Activated B cell treated with CpG ODN at 0.5 μM for 24 hours (primary cell): ENCODE measurements at regions of chr15 and their contacts with region 1.

Region 1: DNA sequence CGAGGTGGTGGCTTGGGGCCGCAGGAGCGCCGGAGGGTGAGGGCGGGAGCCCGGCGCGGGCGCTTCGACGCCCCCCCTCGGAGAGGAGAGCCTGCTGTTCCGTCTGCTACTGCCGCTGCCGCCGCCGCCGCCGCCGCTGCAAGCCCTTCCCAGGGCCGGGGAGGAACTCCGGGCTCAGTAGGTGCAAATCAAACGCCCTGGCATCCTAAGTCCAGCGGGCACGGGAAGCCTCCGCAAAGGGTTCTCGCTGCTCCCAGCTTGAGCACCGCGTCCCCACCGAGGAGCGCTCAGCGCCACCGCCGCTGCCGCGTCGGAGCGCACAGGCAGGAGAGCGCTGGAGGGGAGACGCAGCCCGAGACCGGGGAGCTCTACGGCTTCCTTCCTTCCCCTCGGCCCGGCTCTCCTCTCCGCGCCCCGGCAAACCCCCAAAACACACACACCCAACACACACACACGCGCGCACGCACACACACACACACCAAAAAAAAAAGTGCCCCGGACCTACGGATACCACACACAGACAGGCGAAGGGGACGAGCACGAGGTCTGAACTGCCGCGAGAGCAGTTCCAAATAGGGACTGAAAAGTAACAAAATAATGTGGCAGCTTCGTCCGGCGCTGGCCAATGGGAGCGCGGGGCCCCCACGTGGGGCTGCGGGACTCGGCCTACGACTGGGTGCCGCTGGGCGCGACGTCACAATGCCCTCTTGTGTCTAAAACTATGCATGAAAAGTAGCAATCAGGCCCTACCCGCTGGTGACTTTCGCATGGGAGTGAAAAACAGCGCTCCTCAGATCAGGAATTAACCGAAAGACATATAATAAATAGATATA is at the start of gene TLE3:
- DNase-seq: peak; percentile 96
- ATAC-seq: peak; percentile 56
- H3K4me3 Mint-ChIP-seq: peak within 1 kb of the TSS; percentile 98
- H3K27ac Mint-ChIP-seq: peak within 1 kb of the TSS; percentile 97
- H3K4me1 Mint-ChIP-seq: peaks cover 60% of the 10 kb centered on the region
- H3K27me3 Mint-ChIP-seq: peaks cover 2% of the 10 kb centered on the region
- CTCF ChIP-seq: no peak
- total RNA-seq, gene TLE3: 106 and 110 TPM in 2 replicates

Region 2: DNA sequence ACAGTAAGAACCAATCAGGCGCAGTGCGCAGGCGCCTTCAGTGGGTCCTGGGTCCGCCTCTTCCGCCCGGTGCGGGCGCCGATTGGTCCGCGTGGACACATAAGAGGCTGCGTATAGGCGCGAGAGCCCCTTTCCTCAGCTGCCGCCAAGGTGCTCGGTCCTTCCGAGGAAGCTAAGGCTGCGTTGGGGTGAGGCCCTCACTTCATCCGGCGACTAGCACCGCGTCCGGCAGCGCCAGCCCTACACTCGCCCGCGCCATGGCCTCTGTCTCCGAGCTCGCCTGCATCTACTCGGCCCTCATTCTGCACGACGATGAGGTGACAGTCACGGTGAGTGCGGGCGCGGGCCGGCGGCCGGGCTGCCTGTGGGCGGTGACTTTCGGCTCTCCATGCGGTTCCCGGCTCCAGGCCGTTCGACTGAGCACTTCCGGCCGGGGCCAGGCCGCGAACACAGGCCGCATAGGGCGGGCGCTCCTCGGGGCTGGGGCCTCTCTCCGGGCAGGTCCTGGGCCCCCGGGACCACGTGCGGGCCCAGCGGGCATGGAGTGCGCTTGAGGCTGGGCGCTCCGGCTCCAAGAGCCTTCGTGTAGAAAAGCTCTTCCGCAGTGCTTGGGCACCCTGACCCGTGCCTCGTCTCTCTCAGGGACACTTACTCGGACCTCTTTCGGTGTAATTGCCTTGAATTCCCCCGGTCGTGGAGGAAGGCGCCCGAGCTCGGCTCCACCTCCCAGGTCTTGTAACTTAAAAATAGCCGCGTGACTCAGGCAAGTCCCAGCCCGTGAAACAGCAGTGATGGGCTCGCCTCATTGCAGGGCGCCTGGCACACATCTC is 644.6 kb before region 1 on chr15 and contains the start of gene RPLP1:
- CTCF ChIA-PET with region 1: no interaction called
- POLR2A ChIA-PET with region 1: interaction called, 16 read pairs
- intact Hi-C with region 1: no loop called
- DNase-seq: peak; percentile 94
- ATAC-seq: peak; percentile 90
- H3K4me3 Mint-ChIP-seq: peak within 1 kb of the TSS; percentile 98
- H3K27ac Mint-ChIP-seq: peak within 1 kb of the TSS; percentile 99
- H3K4me1 Mint-ChIP-seq: peaks cover 46% of the 10 kb centered on the region
- H3K27me3 Mint-ChIP-seq: no peaks in the 10 kb centered on the region
- CTCF ChIP-seq: no peak
- total RNA-seq, gene RPLP1: 3,035 and 3,437 TPM in 2 replicates

Region 3: DNA sequence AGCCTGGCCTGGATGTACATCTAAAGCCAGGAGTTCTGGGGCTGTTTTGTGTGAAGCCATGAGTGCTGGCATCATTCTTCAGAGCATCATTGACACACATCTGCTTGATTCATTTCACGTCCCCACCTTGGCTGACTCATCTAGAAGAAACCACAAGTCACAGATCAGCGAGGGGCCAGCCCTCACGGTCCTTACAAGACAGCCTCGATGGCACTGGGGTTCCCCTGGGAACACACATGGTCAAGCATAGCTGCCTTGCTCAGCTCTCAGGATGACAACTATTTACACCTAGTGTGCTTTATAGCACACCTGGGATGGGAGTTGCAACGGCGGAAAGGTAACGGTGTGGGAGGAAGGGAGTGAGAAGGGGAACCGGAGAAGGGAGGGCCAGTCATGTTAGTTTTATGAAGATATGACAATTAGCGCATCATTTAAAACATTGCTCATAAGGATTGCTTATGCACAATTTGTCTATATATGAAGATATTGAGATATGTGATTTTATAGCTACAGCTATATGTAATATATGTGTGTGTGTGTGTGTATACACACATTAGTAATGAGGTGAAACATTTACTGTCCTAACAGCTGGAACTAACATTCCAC is 417.8 kb before region 1 on chr15:
- CTCF ChIA-PET with region 1: no interaction called
- POLR2A ChIA-PET with region 1: interaction called, 5 read pairs
- intact Hi-C with region 1: loop called (anchors 2 kb)
- DNase-seq: peak; percentile 44
- ATAC-seq: peak; percentile 93
- H3K4me3 Mint-ChIP-seq: no peak overlapping the region
- H3K27ac Mint-ChIP-seq: peak overlapping the region; percentile 68
- H3K4me1 Mint-ChIP-seq: peaks cover 25% of the 10 kb centered on the region
- H3K27me3 Mint-ChIP-seq: peaks cover 23% of the 10 kb centered on the region
- CTCF ChIP-seq: no peak

Region 4: DNA sequence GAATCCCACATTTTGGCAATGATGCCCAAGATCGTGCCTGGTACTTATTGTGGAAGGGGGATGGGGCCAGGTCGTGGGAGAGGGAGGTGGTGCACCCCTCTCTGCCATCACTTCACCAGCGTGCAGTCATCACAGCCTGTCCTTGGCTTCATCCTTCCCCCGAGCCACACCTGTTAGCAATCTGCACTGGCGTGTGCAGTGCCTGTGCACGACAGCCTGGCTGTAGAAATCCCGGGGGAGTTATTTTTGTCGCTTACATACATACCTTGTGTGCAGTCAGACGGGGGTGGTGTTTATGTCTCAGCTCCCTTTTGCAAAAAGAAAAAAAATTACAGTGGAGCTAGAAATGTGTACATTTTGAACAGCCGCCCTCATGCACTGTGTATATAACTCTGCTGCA is 215.8 kb before region 1 on chr15:
- CTCF ChIA-PET with region 1: interaction called, 3 read pairs
- POLR2A ChIA-PET with region 1: interaction called, 44 read pairs
- intact Hi-C with region 1: loop called (anchors 1 kb)
- DNase-seq: peak; percentile 54
- ATAC-seq: peak; percentile 94
- H3K4me3 Mint-ChIP-seq: peak overlapping the region; percentile 73
- H3K27ac Mint-ChIP-seq: peak overlapping the region; percentile 82
- H3K4me1 Mint-ChIP-seq: peaks cover 36% of the 10 kb centered on the region
- H3K27me3 Mint-ChIP-seq: peaks cover 3% of the 10 kb centered on the region
- CTCF ChIP-seq: no peak

Region 5: DNA sequence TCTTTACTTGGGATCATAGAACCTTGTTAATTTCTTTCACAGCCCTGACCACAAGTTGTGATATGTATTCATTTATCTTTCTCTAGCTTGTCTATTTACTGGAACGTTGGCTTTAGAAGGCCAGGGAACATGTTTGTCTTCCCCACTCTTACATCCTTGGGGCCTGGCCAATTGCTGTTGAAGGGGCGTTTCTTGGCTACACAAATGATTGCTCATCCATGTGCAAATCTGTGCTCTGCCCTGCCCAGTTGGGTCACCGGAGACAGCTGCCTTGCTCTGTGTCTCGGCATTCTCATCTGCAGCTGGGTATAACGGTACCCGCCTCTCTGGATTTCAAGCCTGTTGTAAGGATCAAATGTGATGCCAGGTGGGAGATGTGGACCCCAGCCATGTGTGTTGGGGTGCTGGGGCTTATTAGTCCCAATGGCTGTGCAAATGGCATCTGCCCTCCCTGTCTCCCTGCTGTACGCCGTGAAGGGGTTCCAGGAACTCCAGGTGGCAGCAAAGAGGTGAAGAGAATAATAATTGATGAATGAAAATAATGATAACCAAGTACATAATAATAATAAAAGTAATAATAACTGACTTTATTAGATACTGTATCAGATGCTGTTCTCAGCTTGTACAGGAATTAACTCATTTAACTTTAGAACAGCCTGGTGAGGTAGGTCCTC is 24.2 kb after region 1 on chr15:
- CTCF ChIA-PET with region 1: no interaction called
- POLR2A ChIA-PET with region 1: no interaction called
- intact Hi-C with region 1: no loop called
- DNase-seq: no peak
- ATAC-seq: no peak
- H3K4me3 Mint-ChIP-seq: no peak overlapping the region
- H3K27ac Mint-ChIP-seq: no peak overlapping the region
- H3K4me1 Mint-ChIP-seq: peaks cover 6% of the 10 kb centered on the region
- H3K27me3 Mint-ChIP-seq: peaks cover 12% of the 10 kb centered on the region
- CTCF ChIP-seq: no peak

Region 6: GRCh38 chr15:70196314-70197291 is 99.0 kb after region 1 on chr15:
- CTCF ChIA-PET with region 1: no interaction called
- POLR2A ChIA-PET with region 1: interaction called, 6 read pairs
- intact Hi-C with region 1: loop called (anchors 1 kb)
- DNase-seq: peak; percentile 62
- ATAC-seq: peak; percentile 82
- H3K4me3 Mint-ChIP-seq: peak overlapping the region; percentile 55
- H3K27ac Mint-ChIP-seq: peak overlapping the region; percentile 79
- H3K4me1 Mint-ChIP-seq: peaks cover 58% of the 10 kb centered on the region
- H3K27me3 Mint-ChIP-seq: peaks cover 7% of the 10 kb centered on the region
- CTCF ChIP-seq: no peak

Region 7: GRCh38 chr15:70318594-70319465 is 221.3 kb after region 1 on chr15:
- CTCF ChIA-PET with region 1: no interaction called
- POLR2A ChIA-PET with region 1: interaction called, 25 read pairs
- intact Hi-C with region 1: loop called (anchors 1 kb)
- DNase-seq: no peak
- ATAC-seq: peak; percentile 25
- H3K4me3 Mint-ChIP-seq: peak overlapping the region; percentile 72
- H3K27ac Mint-ChIP-seq: peak overlapping the region; percentile 85
- H3K4me1 Mint-ChIP-seq: peaks cover 57% of the 10 kb centered on the region
- H3K27me3 Mint-ChIP-seq: no peaks in the 10 kb centered on the region
- CTCF ChIP-seq: no peak

Region 8: DNA sequence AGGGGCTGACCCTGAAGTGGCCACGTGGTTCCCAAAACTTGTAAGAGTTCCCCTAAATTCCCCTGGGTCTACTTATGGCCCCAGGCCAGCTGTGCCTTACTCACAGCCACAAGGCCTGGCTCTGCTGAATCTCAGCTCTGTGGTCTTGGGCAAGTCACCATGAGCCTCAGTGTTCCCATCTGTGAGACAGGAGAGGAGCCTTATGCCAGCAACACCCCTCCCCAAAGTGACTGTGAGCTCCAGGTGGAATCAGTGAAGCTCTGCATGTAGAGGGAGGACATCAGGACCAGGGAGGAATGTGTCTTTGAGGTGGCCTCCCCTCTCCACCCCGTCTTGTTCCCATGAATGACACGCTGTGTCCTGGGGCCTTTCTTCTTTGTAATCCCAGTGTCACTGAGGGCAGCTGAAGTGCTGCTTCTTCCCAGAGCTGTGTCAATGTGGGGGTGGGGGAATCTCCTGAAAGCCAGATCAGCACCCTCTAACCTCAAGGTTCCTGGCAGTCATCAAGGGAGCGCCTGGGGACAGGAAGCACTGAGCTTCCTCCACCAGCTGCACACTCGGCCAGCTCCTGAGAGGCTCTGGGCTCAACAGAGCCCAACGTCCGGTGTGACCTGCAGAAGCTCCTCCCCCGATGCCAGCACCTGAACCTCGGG is 406.9 kb after region 1 on chr15:
- CTCF ChIA-PET with region 1: interaction called, 8 read pairs
- POLR2A ChIA-PET with region 1: interaction called, 36 read pairs
- intact Hi-C with region 1: no loop called
- DNase-seq: peak; percentile 53
- ATAC-seq: peak; percentile 60
- H3K4me3 Mint-ChIP-seq: peak overlapping the region; percentile 70
- H3K27ac Mint-ChIP-seq: peak overlapping the region; percentile 90
- H3K4me1 Mint-ChIP-seq: peaks cover 73% of the 10 kb centered on the region
- H3K27me3 Mint-ChIP-seq: no peaks in the 10 kb centered on the region
- CTCF ChIP-seq: no peak